HAP-1 (cell line): ENCODE measurements at regions of chr7 and their contacts with region 1.

Region 1: GRCh38 chr7:18352339-18353255 is 143.0 kb upstream of the HDAC9 start:
- DNase-seq: peak; percentile 77 to 88
- H3K4me3 ChIP-seq: no peak overlapping the region
- H3K4me1 ChIP-seq: peaks cover 51% of the 10 kb centered on the region
- H3K27me3 ChIP-seq: no peaks in the 10 kb centered on the region

Region 2: DNA sequence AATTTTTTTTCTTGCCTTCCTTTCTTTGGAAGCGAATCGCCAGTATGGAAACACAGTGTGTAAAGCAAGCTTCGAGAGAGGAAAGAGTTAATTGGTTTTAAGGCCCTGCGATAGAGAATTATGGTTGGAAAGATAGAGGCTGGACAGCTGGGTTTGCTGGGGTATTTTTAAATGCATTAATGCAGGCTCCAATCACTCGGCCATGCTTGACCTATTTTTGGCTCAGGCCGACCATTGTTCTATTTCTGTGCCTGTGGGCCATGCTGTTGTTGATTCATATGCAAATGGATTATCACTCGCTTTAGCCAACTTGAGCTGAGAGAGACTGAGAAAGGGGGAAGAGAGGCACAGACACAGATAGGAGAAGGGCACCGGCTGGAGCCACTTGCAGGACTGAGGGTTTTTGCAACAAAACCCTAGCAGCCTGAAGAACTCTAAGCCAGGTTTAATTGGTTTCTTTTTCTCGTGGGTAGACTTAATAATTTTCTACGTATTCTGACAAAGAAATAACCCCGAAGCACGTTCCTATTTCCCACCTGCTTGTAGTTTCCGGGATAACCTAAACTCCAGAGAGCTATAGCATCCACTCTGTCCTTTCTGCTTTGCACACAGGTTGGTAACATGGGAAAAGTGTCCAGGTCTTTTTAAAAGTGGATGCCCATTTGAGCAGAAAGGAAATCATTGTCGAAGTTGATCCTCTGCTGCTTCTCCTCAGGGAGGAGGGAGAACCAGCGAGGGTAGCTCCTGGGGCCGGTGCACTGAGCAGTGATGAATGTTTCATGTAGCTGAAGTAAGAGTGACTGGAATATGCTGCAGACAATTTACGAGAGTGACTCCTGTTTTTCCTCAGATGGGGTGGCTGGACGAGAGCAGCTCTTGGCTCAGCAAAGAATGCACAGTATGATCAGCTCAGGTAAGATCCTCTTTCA is 143.1 kb after region 1 on chr7 and contains the start of gene HDAC9:
- in situ Hi-C with region 1: loop called (anchors 5 kb)
- DNase-seq: peak; percentile 88 to 99
- H3K4me3 ChIP-seq: peak within 1 kb of the TSS; percentile 53
- H3K4me1 ChIP-seq: peaks cover 31% of the 10 kb centered on the region
- H3K27me3 ChIP-seq: no peaks in the 10 kb centered on the region

Region 3: DNA sequence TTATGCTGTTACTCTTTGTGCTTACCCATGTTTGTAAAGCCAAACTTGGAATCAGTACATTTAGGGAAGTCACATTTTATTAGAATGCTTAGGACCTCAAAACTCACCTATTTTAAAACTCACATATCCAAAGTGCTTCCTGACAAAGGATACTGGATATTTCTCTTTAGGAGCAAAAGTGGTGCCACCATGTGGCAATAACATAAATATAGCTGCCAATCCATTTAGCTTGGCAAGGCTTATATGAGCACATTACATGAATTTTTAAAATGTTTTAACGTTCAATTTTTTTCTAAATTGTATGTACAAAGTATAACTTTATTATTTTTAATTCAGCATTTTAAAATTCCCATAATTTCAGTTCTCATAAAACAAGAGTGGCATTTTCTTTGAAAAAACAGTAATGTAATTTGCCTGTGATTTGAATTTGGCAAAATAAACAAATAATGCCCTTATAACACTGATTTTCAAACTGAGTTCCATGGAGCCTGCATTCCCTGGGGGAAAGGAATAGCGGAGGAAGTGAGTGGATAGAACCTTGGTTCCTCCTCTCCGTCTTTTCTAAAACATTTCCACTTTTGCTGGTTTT is 218.4 kb after region 1 on chr7:
- in situ Hi-C with region 1: loop called (anchors 10 kb)
- DNase-seq: peak in 1 of 2 experiments; percentile 46
- H3K4me3 ChIP-seq: no peak overlapping the region
- H3K4me1 ChIP-seq: peaks cover 33% of the 10 kb centered on the region
- H3K27me3 ChIP-seq: no peaks in the 10 kb centered on the region

Region 4: DNA sequence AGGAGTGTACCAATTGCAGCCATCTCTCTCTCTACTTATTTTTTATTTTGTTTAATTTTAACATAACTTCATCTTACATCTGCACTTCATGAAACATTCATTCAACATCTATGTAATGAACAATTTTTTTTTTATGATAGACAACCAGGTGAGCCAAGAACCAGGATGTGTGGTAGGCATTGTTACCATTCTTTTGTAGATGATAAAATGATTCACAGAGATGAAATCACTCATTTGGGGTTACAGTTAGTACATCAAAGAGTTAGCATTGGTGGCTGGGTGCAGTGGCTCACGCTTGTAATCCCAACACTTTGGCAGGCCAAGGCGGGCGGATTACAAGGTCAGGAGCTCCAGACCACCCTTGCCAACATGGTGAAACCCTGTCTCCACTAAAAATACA is 270.8 kb after region 1 on chr7:
- in situ Hi-C with region 1: no loop called
- DNase-seq: no peak
- H3K4me3 ChIP-seq: no peak overlapping the region
- H3K4me1 ChIP-seq: no peaks in the 10 kb centered on the region
- H3K27me3 ChIP-seq: no peaks in the 10 kb centered on the region